ENCODE measurements at regions of chr20 and their contacts with region 1.

Region 1: DNA sequence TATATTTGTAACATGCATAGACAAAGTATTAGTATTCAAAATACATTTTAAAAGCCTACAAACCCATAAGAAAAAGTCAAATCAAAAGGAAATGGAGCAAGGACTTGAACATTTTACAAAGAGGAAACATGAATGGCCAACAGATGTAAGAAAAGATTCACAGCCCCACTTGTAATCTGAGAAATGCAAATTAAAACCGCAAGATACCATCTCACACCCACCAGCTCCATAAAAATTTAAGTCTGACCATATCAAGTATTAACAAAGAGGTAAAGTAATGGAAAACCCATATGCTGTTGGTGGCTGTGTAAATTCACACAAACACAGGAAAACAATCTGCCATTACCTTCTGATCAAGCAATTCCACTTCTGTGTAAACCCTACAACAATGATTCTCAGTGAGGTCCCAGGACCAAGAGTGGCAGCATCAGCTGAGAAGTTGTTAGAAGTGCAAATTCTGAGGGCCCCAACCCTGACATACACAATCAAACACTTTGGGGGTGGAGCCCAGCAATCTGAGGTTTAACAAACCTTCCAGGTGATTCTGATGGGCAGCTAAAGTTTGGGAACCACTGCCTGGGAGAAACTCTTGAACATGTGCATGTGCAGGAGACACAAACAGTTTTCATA is 30.9 kb downstream of the BCL2L1 start:
- DNase-seq: no peak
- ATAC-seq: no peak
- H3K4me3 ChIP-seq: no peak overlapping the region
- H3K27ac ChIP-seq: peak overlapping the region; percentile 23
- H3K4me1 ChIP-seq: peaks cover 67% of the 10 kb centered on the region
- H3K27me3 ChIP-seq: no peaks in the 10 kb centered on the region
- CTCF ChIP-seq: no peak
- EP300 ChIP-seq: no peak
- POLR2A ChIP-seq: no peak
- RAD21 ChIP-seq: no peak

Region 2: DNA sequence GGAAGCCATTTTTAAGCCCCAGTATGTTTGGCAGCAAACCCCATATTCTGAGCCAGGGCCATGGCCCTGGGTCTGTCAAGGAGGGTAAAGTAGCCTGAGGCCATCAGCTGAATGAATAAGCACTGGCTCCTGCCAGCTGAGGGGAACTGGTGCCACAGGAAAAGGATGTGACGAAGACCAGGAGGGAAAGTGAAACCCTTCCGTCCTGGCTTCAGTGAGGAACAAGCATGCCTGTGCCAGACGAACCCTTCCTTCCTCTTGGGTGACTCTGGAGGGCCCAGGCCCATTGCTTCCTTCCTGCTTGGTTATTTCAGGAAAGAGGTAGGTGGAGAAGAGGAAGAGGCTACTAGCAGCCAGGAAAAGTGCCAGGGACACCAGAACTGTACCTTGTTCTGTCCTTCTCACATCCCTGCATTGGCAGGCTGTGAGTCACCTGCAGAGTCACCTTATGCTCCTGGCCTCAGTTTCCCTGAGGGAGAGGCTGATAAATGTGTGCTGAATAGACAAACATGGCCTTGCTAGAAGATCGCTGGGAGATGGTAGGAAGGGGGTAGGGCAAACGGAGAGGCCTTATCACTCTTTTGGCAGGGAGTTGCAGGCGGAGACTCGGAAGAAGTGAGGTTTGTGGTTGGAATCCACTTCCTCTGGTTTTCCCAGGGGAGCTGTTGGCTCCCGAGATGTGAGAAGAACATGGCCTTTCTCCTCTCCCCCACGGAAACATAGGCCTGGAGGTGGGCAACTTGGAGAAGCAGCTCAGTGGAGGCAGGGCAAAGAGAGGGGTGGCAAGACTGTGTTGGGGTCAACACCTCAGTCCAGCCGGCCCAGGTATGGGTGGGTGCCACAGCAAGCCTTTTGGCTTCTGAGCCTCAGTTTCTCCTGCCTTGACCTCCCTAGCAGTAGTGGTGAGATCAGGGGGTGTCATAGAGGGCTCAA is 16.6 kb before region 1 on chr20:
- CTCF ChIA-PET with region 1: no interaction called
- POLR2A ChIA-PET with region 1: interaction called, 317 read pairs
- in situ Hi-C with region 1: no loop called
- intact Hi-C with region 1: no loop called
- DNase-seq: no peak
- ATAC-seq: no peak
- H3K4me3 ChIP-seq: no peak overlapping the region
- H3K27ac ChIP-seq: peak overlapping the region; percentile 0
- H3K4me1 ChIP-seq: peaks cover 81% of the 10 kb centered on the region
- H3K27me3 ChIP-seq: no peaks in the 10 kb centered on the region
- CTCF ChIP-seq: no peak
- EP300 ChIP-seq: no peak
- POLR2A ChIP-seq: no peak; a peak in 1 of 4 replicates
- RAD21 ChIP-seq: no peak

Measured in HepG2 (cell line).